Endothelial cell of umbilical vein (primary cell): ENCODE measurements at regions of chr17 and their contacts with region 1.

Region 1: GRCh38 chr17:58517734-58518609 is 3.5 kb upstream of the MTMR4 start:
- DNase-seq: peak; percentile 100
- H3K4me3 ChIP-seq: peak overlapping the region; percentile 29 to 73 (median 56)
- H3K27ac ChIP-seq: peak overlapping the region; percentile 81
- H3K4me1 ChIP-seq: peaks cover 18% of the 10 kb centered on the region
- H3K27me3 ChIP-seq: no peaks in the 10 kb centered on the region
- CTCF ChIP-seq: no peak
- POLR2A ChIP-seq: peak; percentile 71

Region 2: DNA sequence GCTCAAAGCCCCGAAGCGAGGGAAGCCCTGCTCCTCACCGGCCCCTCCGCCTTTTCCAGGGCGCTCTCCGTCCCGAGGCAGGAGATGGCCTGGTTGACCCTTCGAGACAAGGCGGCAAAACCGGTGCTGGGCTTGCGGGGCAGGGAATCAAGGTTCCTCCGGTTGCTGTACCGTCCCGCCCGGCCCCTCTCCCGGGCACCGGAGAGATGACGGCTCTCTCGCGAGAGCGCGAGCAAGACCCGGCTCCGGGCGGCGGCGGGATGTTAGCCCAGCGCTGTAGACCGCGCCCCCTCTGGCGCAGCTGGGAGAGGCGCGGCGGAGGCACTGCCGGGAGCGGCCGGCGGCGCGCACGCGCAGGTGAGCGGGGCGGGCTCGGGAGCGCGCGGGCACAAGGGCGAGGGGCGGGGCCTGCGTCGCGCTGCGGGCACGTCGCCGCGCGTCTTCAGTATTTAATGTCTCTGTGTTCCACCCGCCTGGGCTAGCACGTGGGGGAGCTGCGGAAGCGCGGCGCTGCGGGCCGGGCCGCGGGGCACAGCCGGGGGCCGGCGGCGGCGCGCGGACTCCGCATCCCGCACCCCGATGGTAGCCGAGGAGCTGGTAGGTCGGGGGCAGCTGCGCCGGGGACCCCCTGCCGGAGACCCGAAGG is 1433.0 kb before region 1 on chr17 and contains the start of gene AKAP1:
- CTCF ChIA-PET with region 1: no interaction called
- POLR2A ChIA-PET with region 1: no interaction called
- dilution Hi-C with region 1: no loop called
- intact Hi-C with region 1: loop called (anchors 10 kb)
- DNase-seq: peak; percentile 95
- H3K4me3 ChIP-seq: peak within 1 kb of the TSS; percentile 45 to 99 (median 68)
- H3K27ac ChIP-seq: peak within 1 kb of the TSS; percentile 88
- H3K4me1 ChIP-seq: peaks cover 8% of the 10 kb centered on the region
- H3K27me3 ChIP-seq: peaks cover 0 to 1% of the 10 kb centered on the region in 2 experiments
- CTCF ChIP-seq: peak in 1 of 2 donors; percentile 29
- POLR2A ChIP-seq: peak; percentile 95
- total RNA-seq, gene AKAP1: 20.9 and 23.9 TPM in 2 replicates

Region 3: GRCh38 chr17:58432806-58433572 is 85.0 kb before region 1 on chr17:
- CTCF ChIA-PET with region 1: no interaction called
- POLR2A ChIA-PET with region 1: no interaction called
- dilution Hi-C with region 1: no loop called
- intact Hi-C with region 1: no loop called
- DNase-seq: no peak
- H3K4me3 ChIP-seq: no peak overlapping the region
- H3K27ac ChIP-seq: no peak overlapping the region
- H3K4me1 ChIP-seq: no peaks in the 10 kb centered on the region
- H3K27me3 ChIP-seq: peaks cover 4% of the 10 kb centered on the region in 2 experiments
- CTCF ChIP-seq: no peak
- POLR2A ChIP-seq: no peak

Region 4: GRCh38 chr17:58577642-58578091 is 59.7 kb after region 1 on chr17:
- CTCF ChIA-PET with region 1: interaction called, 13 read pairs
- POLR2A ChIA-PET with region 1: no interaction called
- dilution Hi-C with region 1: no loop called
- intact Hi-C with region 1: loop called (anchors 2 kb)
- DNase-seq: peak; percentile 30
- H3K4me3 ChIP-seq: no peak overlapping the region
- H3K27ac ChIP-seq: no peak overlapping the region
- H3K4me1 ChIP-seq: no peaks in the 10 kb centered on the region
- H3K27me3 ChIP-seq: peaks cover 0 to 3% of the 10 kb centered on the region in 2 experiments
- CTCF ChIP-seq: peak; percentile 66 to 75
- POLR2A ChIP-seq: no peak

Region 5: DNA sequence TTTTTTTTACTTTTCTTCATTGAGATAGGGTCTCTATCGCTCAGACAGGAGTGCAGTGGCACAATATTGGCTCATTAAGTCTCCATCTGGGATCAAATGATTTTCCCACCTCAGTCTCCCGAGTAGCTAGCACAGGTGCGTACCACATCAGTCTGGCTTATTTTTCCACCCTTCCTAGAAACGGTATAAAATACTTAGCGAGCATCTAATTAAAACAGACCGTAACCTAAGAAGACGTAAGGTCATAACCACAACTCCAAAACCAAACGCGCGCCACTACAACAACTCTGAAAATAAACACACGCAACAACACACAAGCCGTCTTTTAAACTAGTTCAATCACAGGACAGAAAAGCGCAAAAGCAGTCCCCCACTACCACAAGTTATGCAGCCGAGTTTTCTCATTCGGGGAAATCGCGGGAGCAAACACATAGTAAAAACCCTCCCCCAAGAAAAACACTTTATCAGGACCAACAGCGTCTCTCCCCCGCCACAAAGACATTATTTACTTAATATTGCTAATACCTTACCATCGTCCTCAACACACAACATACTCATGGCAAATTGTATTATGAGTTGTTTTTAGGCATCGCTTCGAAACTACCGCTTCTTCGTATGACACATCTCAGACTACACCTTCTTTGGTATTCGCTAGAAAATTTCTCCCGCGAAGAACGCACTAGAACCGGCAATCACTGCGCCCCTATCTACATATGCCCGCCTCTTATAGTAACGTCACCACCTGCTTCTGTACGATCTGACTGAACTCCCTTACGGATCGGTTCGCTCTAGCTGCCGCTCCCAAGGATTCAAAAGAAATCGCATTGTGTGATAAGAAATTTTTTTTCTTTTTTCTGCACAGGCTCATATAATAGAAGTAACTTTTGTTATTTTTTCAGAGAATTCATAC is 141.1 kb after region 1 on chr17:
- CTCF ChIA-PET with region 1: interaction called, 4 read pairs
- POLR2A ChIA-PET with region 1: interaction called, 15 read pairs
- dilution Hi-C with region 1: no loop called
- intact Hi-C with region 1: loop called (anchors 1 kb)
- DNase-seq: peak; percentile 98
- H3K4me3 ChIP-seq: peak overlapping the region; percentile 26 to 42 (median 28)
- H3K27ac ChIP-seq: peak overlapping the region; percentile 94
- H3K4me1 ChIP-seq: no peaks in the 10 kb centered on the region
- H3K27me3 ChIP-seq: no peaks in the 10 kb centered on the region
- CTCF ChIP-seq: no peak
- POLR2A ChIP-seq: peak; percentile 100

Region 6: GRCh38 chr17:58755577-58756245 is 237.7 kb after region 1 on chr17 and contains the start of gene PPM1E:
- CTCF ChIA-PET with region 1: interaction called, 3 read pairs
- POLR2A ChIA-PET with region 1: no interaction called
- dilution Hi-C with region 1: no loop called
- intact Hi-C with region 1: loop called (anchors 5 kb)
- DNase-seq: peak; percentile 48
- H3K4me3 ChIP-seq: peak within 1 kb of the TSS; percentile 37 to 74 (median 65)
- H3K27ac ChIP-seq: no peak within 1 kb of the TSS
- H3K4me1 ChIP-seq: peaks cover 13% of the 10 kb centered on the region
- H3K27me3 ChIP-seq: peaks cover 22 to 49% of the 10 kb centered on the region in 2 experiments
- CTCF ChIP-seq: no peak
- POLR2A ChIP-seq: no peak
- total RNA-seq, gene PPM1E: not detected in 2 replicates

Region 7: GRCh38 chr17:59106463-59107305 is 588.7 kb after region 1 on chr17 and contains the start of gene TRIM37:
- CTCF ChIA-PET with region 1: no interaction called
- POLR2A ChIA-PET with region 1: no interaction called
- dilution Hi-C with region 1: no loop called
- intact Hi-C with region 1: loop called (anchors 2 kb)
- DNase-seq: peak; percentile 100
- H3K4me3 ChIP-seq: peak within 1 kb of the TSS; percentile 29 to 91 (median 77)
- H3K27ac ChIP-seq: peak within 1 kb of the TSS; percentile 63
- H3K4me1 ChIP-seq: peaks cover 18% of the 10 kb centered on the region
- H3K27me3 ChIP-seq: no peaks in the 10 kb centered on the region
- CTCF ChIP-seq: no peak
- POLR2A ChIP-seq: peak; percentile 72
- total RNA-seq, gene TRIM37: 37.1 and 41.9 TPM in 2 replicates